Tibial artery (tissue), 4 donors: ENCODE measurements at regions of chr7 and their contacts with region 1.

Region 1: DNA sequence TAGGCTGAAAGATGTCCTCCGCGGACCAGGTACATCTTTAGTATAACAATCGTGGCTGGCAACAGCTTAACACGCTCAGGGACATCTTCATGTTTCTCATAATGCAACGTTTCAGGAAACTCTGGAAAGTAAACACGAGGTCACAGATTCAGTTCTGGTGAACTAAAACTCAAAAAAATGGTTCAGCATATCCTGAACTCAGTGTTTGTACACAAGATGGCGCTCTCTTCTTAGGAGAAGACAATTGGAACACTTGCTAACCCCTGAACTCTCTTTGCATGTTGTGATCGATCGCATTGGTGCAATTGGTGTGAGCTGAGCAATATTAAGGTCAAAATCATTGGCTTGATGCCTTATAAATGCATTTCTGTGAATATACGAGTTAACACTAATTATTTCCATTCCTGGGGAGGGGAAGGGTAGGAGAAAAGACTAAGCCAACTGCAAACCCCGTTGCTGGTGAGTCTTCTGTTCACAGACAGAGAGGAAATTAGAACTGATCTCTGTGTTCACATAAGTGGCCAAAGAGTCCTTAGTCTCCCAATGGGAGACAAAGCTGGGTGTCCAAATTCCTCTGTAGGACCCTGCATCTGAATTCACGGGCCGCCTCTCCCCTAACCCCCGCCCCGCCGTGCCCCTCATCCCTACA is 52.6 kb upstream of the FAM180A start:
- DNase-seq: no peak
- H3K4me3 ChIP-seq: peak overlapping the region; percentile 5 to 17
- H3K27ac ChIP-seq: peak overlapping the region; percentile 36 to 46
- H3K4me1 ChIP-seq: peaks cover 0 to 24% (median 4%) of the 10 kb centered on the region in 4 donors
- H3K27me3 ChIP-seq: no peaks in the 10 kb centered on the region
- CTCF ChIP-seq: peak; percentile 76 to 77

Region 2: GRCh38 chr7:136009488-136010079 is 208.4 kb after region 1 on chr7:
- intact Hi-C with region 1: loop called (anchors 5 kb)
- DNase-seq: no peak
- H3K4me3 ChIP-seq: no peak overlapping the region
- H3K27ac ChIP-seq: no peak overlapping the region
- H3K4me1 ChIP-seq: no peaks in the 10 kb centered on the region
- H3K27me3 ChIP-seq: no peaks in the 10 kb centered on the region
- CTCF ChIP-seq: peak; percentile 67 to 82